ENCODE measurements at regions of chr7 and their contacts with region 1.

Region 1: GRCh38 chr7:12322284-12322902 is 81.3 kb downstream of the VWDE start:
- DNase-seq: no peak
- ATAC-seq: no peak

Region 2: GRCh38 chr7:11427686-11428273 is 894.6 kb before region 1 on chr7:
- intact Hi-C with region 1: loop called (anchors 5 kb)
- DNase-seq: no peak
- ATAC-seq: no peak

Region 3: GRCh38 chr7:11835260-11835659 is 487.1 kb before region 1 on chr7:
- intact Hi-C with region 1: loop called (anchors 5 kb)
- DNase-seq: no peak
- ATAC-seq: no peak

Region 4: DNA sequence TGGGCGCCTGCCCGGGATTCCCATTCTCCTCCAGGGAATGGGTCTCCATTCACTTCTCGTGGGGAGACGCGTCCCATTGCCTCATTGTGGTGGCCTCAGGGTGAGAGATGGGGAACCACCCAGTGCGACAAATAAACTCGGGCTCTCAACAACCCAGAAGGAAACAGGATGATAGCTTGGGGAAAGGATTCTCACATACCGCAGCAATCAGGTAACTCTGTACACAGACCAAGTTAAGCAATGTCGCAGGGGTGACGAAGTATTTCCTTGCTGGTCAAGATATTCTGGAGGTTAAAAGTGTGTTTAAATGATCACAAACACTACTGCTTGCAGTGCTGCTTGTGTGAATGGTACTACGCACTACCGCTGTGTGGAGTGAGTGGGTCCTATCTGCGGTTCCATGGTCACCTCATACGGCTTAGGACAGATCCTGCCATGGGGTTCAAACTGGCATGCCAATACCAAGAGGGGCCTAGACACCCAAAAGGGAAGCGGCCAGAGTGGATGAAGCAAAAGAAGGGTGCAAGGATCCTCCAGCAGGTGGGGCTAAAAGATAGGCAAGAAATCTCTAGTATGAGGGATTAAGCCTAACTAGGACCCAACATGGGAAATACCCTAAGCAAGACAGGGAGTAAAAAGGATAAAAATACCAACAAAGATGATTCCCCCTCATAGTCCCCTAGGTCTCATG is 255.1 kb before region 1 on chr7:
- intact Hi-C with region 1: loop called (anchors 2 kb)
- DNase-seq: no peak
- ATAC-seq: no peak

Measured in Right ventricle myocardium inferior (tissue), 1 donor.